ENCODE measurements at regions of chr19 and their contacts with region 1.

Region 1: DNA sequence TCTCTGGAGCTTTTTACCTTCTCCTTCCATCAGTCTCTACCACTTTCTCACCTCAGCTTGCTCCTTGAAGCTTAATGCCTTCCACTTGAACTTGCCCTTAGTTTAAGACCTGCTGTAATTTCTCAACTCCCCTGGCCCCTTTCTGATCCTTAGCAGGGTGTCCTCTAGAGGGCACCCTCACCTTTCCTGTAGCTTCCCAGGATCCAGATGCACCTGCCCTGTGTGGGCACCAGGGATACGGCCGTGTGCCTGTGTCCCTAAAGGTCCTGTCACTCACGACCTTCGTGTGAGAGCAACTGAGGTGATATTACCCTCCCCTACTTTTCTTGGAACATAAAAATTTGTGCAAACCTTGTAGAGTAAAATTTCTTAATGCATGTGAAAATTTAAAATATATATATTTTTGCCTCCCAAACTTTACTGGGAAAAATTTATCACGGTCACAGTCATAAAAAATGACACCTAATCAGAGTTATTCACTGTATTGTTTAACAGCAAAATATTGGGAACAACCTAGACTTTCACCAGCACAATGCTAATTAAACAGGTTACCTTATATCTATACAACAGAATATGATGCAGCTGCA is 46.4 kb downstream of the PSG3 start:
- DNase-seq: no peak
- H3K4me3 ChIP-seq: no peak overlapping the region
- H3K27ac ChIP-seq: no peak overlapping the region
- H3K4me1 ChIP-seq: no peaks in the 10 kb centered on the region
- H3K27me3 ChIP-seq: no peaks in the 10 kb centered on the region
- CTCF ChIP-seq: peak in 1 of 2 donors; percentile 3
- POLR2A ChIP-seq: no peak

Region 2: DNA sequence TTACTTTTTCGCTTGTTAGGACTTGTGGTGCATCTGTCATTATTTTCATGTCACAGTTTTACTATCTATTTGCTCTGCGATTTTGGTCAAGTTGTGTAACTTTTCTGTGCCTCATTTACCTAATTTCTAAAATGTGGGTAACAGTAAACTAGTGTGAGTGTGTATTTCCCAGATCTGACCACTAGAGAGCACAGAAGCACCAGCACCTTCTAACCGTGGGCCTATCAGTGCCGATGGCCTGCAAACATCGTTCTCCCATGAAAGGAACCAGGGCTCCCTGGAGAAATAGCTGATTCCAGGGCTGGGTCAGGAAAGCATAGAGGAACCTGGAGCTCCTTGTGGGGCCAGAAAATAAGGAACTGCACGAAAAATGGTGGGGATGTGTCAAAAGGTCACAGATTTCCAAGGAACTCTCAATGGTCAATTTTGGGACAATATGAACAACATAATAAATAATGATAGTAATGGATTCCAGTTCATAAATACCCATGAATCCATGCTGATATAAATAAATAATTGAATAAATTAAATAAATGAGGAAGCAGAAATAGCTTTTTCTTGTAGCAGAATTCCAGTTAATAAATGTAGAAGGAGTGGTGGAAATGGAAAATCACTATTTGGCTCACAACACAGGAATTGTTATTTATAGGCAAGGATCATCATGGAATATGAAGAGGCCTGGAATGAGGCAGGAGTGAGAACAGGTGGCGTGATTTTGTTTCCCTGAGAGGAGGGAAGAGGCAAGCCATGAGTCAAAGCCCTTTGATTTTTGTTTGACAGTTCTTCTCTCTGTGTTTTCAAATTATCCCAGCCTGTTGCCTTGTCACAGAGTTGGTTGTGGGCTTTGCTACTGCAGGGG is 130.3 kb before region 1 on chr19:
- CTCF ChIA-PET with region 1: no interaction called
- POLR2A ChIA-PET with region 1: no interaction called
- dilution Hi-C with region 1: no loop called
- intact Hi-C with region 1: no loop called
- DNase-seq: peak; percentile 38
- H3K4me3 ChIP-seq: no peak overlapping the region
- H3K27ac ChIP-seq: no peak overlapping the region
- H3K4me1 ChIP-seq: no peaks in the 10 kb centered on the region
- H3K27me3 ChIP-seq: no peaks in the 10 kb centered on the region
- CTCF ChIP-seq: peak; percentile 35 to 58
- POLR2A ChIP-seq: no peak

Region 3: GRCh38 chr19:42762782-42763181 is 68.9 kb after region 1 on chr19:
- CTCF ChIA-PET with region 1: no interaction called
- POLR2A ChIA-PET with region 1: no interaction called
- dilution Hi-C with region 1: no loop called
- intact Hi-C with region 1: loop called (anchors 10 kb)
- DNase-seq: no peak
- H3K4me3 ChIP-seq: no peak overlapping the region
- H3K27ac ChIP-seq: no peak overlapping the region
- H3K4me1 ChIP-seq: no peaks in the 10 kb centered on the region
- H3K27me3 ChIP-seq: no peaks in the 10 kb centered on the region
- CTCF ChIP-seq: no peak
- POLR2A ChIP-seq: no peak

Region 4: GRCh38 chr19:43489310-43489709 is 795.5 kb after region 1 on chr19:
- CTCF ChIA-PET with region 1: no interaction called
- POLR2A ChIA-PET with region 1: no interaction called
- dilution Hi-C with region 1: no loop called
- intact Hi-C with region 1: no loop called
- DNase-seq: no peak
- H3K4me3 ChIP-seq: no peak overlapping the region
- H3K27ac ChIP-seq: no peak overlapping the region
- H3K4me1 ChIP-seq: no peaks in the 10 kb centered on the region
- H3K27me3 ChIP-seq: no peaks in the 10 kb centered on the region
- CTCF ChIP-seq: no peak
- POLR2A ChIP-seq: no peak